CD4-positive, alpha-beta T cell (primary cell): ENCODE measurements at regions of chr19 and their contacts with region 1.

Region 1: DNA sequence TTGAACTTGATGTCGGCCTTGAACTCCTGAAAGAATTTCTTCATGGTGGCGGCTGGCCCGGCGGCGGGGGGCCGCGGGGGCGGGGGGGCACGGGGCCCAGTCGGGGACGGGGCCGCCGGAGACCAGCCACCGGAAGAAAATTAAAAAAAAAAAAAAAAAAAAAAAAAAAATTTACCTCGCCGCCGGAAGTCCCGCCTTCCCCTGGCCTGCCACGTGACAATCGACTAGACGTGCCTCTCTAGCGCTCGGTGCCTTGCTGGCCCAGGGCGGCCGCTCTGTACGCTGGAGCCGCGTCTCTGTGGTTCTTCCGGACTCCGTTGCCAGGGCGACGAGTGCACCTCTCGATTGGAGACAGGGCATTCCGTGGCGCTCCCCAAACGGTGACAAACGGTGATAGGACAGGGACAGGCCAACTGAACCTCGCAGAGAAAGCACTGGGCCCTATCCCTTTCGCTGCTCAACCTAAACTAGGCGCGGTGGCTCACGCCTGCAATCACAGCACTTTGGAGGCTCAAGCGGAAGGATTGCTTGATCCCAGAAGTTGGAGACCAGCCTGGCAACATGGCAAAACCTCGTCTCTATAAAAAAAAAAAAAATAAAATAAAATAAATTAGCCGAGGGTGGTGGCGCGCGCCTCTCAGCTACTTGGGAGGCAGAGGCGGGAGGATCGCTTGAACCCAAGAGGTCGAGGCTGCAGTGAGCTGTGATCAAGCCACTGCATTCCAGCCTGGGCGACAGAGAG is at the start of gene UBXN6:
- DNase-seq: peak; percentile 96 to 100 (median 98)
- ATAC-seq: peak; percentile 95
- H3K4me3 ChIP-seq: peak within 1 kb of the TSS; percentile 70
- H3K4me3 Mint-ChIP-seq: peak within 1 kb of the TSS; percentile 94
- H3K27ac ChIP-seq: peak within 1 kb of the TSS; percentile 49 to 68
- H3K27ac Mint-ChIP-seq: peak within 1 kb of the TSS; percentile 89
- H3K4me1 ChIP-seq: peaks cover 25% of the 10 kb centered on the region
- H3K4me1 Mint-ChIP-seq: peaks cover 16% of the 10 kb centered on the region
- H3K27me3 ChIP-seq: no peaks in the 10 kb centered on the region
- H3K27me3 Mint-ChIP-seq: no peaks in the 10 kb centered on the region
- CTCF ChIP-seq: no peak
- total RNA-seq, gene UBXN6: 54.5 to 58.4 TPM

Region 2: DNA sequence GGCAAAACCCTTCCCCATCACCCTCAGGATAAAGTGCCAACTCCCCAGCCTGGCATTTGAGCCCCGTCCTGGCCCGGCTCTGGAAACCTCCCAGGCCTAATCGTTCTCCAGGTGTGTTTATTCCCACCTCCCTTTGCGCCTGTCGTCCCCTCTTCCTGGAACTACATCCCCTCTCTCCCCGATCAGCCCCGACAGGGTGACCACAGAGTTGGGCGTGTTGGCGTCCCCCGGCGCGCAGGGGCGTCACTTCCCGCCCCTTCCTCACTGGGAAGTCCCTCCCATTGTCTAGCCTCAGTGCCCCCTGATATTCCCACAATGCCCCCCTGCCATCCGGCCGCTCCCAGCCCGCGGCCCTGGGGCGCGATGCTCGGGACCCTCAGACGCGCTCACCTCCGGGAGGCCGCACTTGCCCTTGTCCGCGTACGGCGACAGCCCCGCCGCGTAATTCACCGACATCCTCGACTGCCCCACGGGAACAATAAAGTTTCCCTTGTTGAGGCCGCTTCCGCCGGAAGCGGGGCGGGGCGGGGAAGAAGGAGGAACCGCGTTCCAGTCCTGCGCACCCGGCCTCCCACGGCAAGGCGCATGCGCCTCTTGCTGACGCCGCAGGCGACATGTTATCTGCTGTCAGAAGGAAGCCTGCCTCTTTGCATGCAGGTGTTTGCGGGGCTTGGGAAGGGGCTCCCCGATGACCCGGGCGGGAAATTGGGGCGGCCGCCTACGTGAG is 275.6 kb before region 1 on chr19 and contains the starts of genes ANKRD24 and SIRT6:
- CTCF ChIA-PET with region 1: no interaction called
- POLR2A ChIA-PET with region 1: no interaction called
- intact Hi-C with region 1: loop called in 1 of 2 experiments (anchors 5 kb)
- DNase-seq: peak; percentile 90 to 98 (median 96)
- ATAC-seq: peak; percentile 80
- H3K4me3 ChIP-seq: peak within 1 kb of the TSS; percentile 96
- H3K4me3 Mint-ChIP-seq: peak within 1 kb of the TSS; percentile 99
- H3K27ac ChIP-seq: peak within 1 kb of the TSS; percentile 66 to 80
- H3K27ac Mint-ChIP-seq: peak within 1 kb of the TSS; percentile 96
- H3K4me1 ChIP-seq: peaks cover 47% of the 10 kb centered on the region
- H3K4me1 Mint-ChIP-seq: peaks cover 32% of the 10 kb centered on the region
- H3K27me3 ChIP-seq: no peaks in the 10 kb centered on the region
- H3K27me3 Mint-ChIP-seq: peaks cover 3% of the 10 kb centered on the region
- CTCF ChIP-seq: no peak
- total RNA-seq, gene ANKRD24: 0.59 to 0.60 TPM
- total RNA-seq, gene SIRT6: 11.2 to 14.2 TPM

Region 3: GRCh38 chr19:4328243-4328990 is 129.4 kb before region 1 on chr19:
- CTCF ChIA-PET with region 1: no interaction called
- POLR2A ChIA-PET with region 1: no interaction called
- intact Hi-C with region 1: loop called in 1 of 2 experiments (anchors 5 kb)
- DNase-seq: peak; percentile 84 to 99 (median 96)
- ATAC-seq: peak; percentile 83
- H3K4me3 ChIP-seq: peak overlapping the region; percentile 61
- H3K4me3 Mint-ChIP-seq: peak overlapping the region; percentile 90
- H3K27ac ChIP-seq: no peak overlapping the region
- H3K27ac Mint-ChIP-seq: peak overlapping the region; percentile 86
- H3K4me1 ChIP-seq: peaks cover 31% of the 10 kb centered on the region
- H3K4me1 Mint-ChIP-seq: peaks cover 25% of the 10 kb centered on the region
- H3K27me3 ChIP-seq: no peaks in the 10 kb centered on the region
- H3K27me3 Mint-ChIP-seq: no peaks in the 10 kb centered on the region
- CTCF ChIP-seq: no peak

Region 4: GRCh38 chr19:4471403-4472173 is 13.8 kb after region 1 on chr19:
- CTCF ChIA-PET with region 1: no interaction called
- POLR2A ChIA-PET with region 1: interaction called, 36 read pairs
- intact Hi-C with region 1: loop called (anchors 1 kb)
- DNase-seq: peak; percentile 92 to 100 (median 96)
- ATAC-seq: peak; percentile 84
- H3K4me3 ChIP-seq: peak overlapping the region; percentile 64
- H3K4me3 Mint-ChIP-seq: no peak overlapping the region
- H3K27ac ChIP-seq: peak overlapping the region; percentile 71 to 72
- H3K27ac Mint-ChIP-seq: no peak overlapping the region
- H3K4me1 ChIP-seq: peaks cover 35% of the 10 kb centered on the region
- H3K4me1 Mint-ChIP-seq: peaks cover 22% of the 10 kb centered on the region
- H3K27me3 ChIP-seq: no peaks in the 10 kb centered on the region
- H3K27me3 Mint-ChIP-seq: no peaks in the 10 kb centered on the region
- CTCF ChIP-seq: no peak

Region 5: GRCh38 chr19:4589579-4590410 is 132.0 kb after region 1 on chr19:
- CTCF ChIA-PET with region 1: no interaction called
- POLR2A ChIA-PET with region 1: no interaction called
- intact Hi-C with region 1: no loop called
- DNase-seq: peak in 3 of 14 experiments; percentile 27 to 51 (median 45)
- ATAC-seq: no peak
- H3K4me3 ChIP-seq: no peak overlapping the region
- H3K4me3 Mint-ChIP-seq: no peak overlapping the region
- H3K27ac ChIP-seq: no peak overlapping the region
- H3K27ac Mint-ChIP-seq: no peak overlapping the region
- H3K4me1 ChIP-seq: peaks cover 2% of the 10 kb centered on the region
- H3K4me1 Mint-ChIP-seq: peaks cover 5% of the 10 kb centered on the region
- H3K27me3 ChIP-seq: peaks cover 22 to 31% of the 10 kb centered on the region in 2 experiments
- H3K27me3 Mint-ChIP-seq: peaks cover 71% of the 10 kb centered on the region
- CTCF ChIP-seq: no peak